Caco-2 (cell line): ENCODE measurements at regions of chr10 and their contacts with region 1.

Region 1: GRCh38 chr10:58384999-58385783 is at the start of gene TFAM:
- DNase-seq: peak; percentile 99 to 100
- H3K4me3 ChIP-seq: peak within 1 kb of the TSS; percentile 83
- H3K4me3 Mint-ChIP-seq: peak within 1 kb of the TSS; percentile 87
- H3K27ac Mint-ChIP-seq: peak within 1 kb of the TSS; percentile 80
- H3K4me1 ChIP-seq: no peaks in the 10 kb centered on the region; the same call in 1 of the 2 replicates
- H3K4me1 Mint-ChIP-seq: peaks cover 9% of the 10 kb centered on the region
- H3K27me3 ChIP-seq: no peaks in the 10 kb centered on the region
- H3K27me3 Mint-ChIP-seq: no peaks in the 10 kb centered on the region
- CTCF ChIP-seq: peak; percentile 71 to 98
- total RNA-seq, gene TFAM: 228 and 240 TPM in 2 replicates

Region 2: DNA sequence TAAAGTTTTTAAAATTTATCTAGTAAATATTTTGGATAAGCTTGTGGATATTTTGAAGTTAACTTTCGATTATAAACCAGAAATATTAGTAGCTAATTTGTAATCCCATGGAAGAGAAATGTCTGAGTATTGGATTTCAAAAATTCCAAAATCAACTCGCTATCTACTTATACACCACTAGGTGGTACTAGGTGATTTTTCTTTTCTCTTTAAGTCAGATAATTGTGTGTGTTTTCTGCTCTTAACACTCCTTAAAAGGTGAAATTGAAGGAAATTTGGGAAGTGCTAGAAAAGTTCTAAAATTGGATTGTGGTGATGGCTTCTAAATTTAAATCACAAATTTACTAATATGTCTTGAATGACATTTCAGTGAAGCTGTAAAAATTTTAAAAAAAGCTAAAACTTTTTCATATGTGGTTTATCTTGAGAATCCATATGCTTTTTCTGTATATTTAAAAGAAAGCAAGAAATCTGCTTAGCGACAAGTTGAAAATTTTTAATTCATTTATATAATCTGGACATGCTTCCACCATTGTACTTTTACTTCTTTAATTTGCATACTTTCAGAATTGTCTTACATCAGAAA is 207.7 kb before region 1 on chr10:
- CTCF ChIA-PET with region 1: interaction called, 3 read pairs
- POLR2A ChIA-PET with region 1: no interaction called
- intact Hi-C with region 1: loop called (anchors 1 kb)
- DNase-seq: no peak
- H3K4me3 ChIP-seq: no peak overlapping the region
- H3K4me3 Mint-ChIP-seq: no peak overlapping the region
- H3K27ac Mint-ChIP-seq: no peak overlapping the region
- H3K4me1 ChIP-seq: no peaks in the 10 kb centered on the region
- H3K4me1 Mint-ChIP-seq: peaks cover 6% of the 10 kb centered on the region
- H3K27me3 ChIP-seq: no peaks in the 10 kb centered on the region; the same call in 1 of the 2 replicates
- H3K27me3 Mint-ChIP-seq: peaks cover 5% of the 10 kb centered on the region
- CTCF ChIP-seq: peak; percentile 75

Region 3: DNA sequence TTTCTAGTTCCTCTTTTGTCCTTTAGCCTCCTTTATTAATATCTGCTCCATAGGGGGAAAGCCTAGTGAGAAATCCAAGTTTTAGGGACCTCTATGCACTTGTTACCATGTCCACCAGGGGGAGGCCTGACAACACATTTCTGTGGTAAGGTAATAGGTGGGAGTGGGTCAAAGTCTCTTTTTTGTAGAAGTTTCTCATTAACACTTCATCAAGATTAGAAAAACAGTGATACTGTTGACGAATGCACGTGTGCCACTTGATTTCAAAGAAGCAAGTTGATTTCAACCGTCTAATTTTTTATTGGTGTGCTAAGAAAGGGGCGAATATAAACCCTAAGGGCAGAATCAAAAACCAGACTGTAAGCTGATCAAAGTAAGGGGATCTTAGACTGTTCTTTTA is 85.6 kb before region 1 on chr10:
- CTCF ChIA-PET with region 1: interaction called, 24 read pairs
- POLR2A ChIA-PET with region 1: no interaction called
- intact Hi-C with region 1: loop called (anchors 1 kb)
- DNase-seq: peak; percentile 83 to 90
- H3K4me3 ChIP-seq: peak overlapping the region; percentile 3; the same call in 1 of the 2 replicates
- H3K4me3 Mint-ChIP-seq: peak overlapping the region; percentile 37
- H3K27ac Mint-ChIP-seq: no peak overlapping the region
- H3K4me1 ChIP-seq: peaks cover 10% of the 10 kb centered on the region
- H3K4me1 Mint-ChIP-seq: peaks cover 9% of the 10 kb centered on the region
- H3K27me3 ChIP-seq: no peaks in the 10 kb centered on the region
- H3K27me3 Mint-ChIP-seq: no peaks in the 10 kb centered on the region
- CTCF ChIP-seq: peak; percentile 97 to 99

Region 4: DNA sequence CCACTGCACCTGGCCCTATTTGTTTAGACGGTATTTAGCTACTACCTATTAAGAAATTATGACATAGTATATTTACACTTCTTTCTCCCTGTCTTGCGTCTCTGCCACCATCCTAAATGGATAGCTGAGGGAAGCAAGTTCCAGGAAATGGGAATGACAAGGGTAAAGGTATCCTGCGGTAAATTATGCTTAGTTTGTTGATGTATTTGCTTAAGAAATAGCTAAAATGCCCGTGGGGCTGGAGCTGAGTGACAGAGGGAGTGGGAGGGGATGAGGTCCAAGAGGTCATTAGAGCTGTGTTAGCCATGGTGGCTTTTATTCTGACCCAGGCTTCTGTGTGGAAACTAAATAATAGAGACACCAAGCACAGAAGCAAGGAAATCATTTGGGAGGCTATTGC is 79.4 kb before region 1 on chr10:
- CTCF ChIA-PET with region 1: interaction called, 24 read pairs
- POLR2A ChIA-PET with region 1: interaction called, 4 read pairs
- intact Hi-C with region 1: no loop called
- DNase-seq: peak; percentile 61 to 71
- H3K4me3 ChIP-seq: no peak overlapping the region
- H3K4me3 Mint-ChIP-seq: no peak overlapping the region
- H3K27ac Mint-ChIP-seq: no peak overlapping the region
- H3K4me1 ChIP-seq: peaks cover 13% of the 10 kb centered on the region; the same call in 1 of the 2 replicates
- H3K4me1 Mint-ChIP-seq: peaks cover 18% of the 10 kb centered on the region
- H3K27me3 ChIP-seq: no peaks in the 10 kb centered on the region
- H3K27me3 Mint-ChIP-seq: peaks cover under 1% of the 10 kb centered on the region
- CTCF ChIP-seq: no peak

Region 5: DNA sequence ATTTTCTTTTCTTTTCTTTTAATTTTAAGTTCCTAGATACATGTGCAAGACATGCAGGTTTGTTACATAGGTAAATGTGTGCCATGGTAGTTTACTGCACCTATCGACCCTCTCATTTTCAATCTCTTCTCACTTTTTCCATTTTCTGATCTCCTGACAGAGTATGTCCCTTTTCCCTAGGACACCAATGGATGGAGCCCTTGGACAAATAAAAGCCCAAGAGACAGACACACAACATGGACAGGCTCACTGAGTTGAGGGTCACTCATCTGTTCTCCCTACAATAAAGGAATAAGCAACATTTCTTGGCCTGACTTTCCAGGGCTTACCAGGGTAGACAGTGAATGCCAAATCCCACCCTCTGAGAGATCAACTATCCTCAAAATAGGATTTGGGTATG is 65.6 kb before region 1 on chr10:
- CTCF ChIA-PET with region 1: no interaction called
- POLR2A ChIA-PET with region 1: no interaction called
- intact Hi-C with region 1: loop called (anchors 1 kb)
- DNase-seq: peak in 1 of 2 experiments; percentile 35
- H3K4me3 ChIP-seq: no peak overlapping the region
- H3K4me3 Mint-ChIP-seq: no peak overlapping the region
- H3K27ac Mint-ChIP-seq: no peak overlapping the region
- H3K4me1 ChIP-seq: peaks cover 6% of the 10 kb centered on the region; the same call in 1 of the 2 replicates
- H3K4me1 Mint-ChIP-seq: peaks cover 8% of the 10 kb centered on the region
- H3K27me3 ChIP-seq: no peaks in the 10 kb centered on the region
- H3K27me3 Mint-ChIP-seq: peaks cover 3% of the 10 kb centered on the region
- CTCF ChIP-seq: no peak

Region 6: DNA sequence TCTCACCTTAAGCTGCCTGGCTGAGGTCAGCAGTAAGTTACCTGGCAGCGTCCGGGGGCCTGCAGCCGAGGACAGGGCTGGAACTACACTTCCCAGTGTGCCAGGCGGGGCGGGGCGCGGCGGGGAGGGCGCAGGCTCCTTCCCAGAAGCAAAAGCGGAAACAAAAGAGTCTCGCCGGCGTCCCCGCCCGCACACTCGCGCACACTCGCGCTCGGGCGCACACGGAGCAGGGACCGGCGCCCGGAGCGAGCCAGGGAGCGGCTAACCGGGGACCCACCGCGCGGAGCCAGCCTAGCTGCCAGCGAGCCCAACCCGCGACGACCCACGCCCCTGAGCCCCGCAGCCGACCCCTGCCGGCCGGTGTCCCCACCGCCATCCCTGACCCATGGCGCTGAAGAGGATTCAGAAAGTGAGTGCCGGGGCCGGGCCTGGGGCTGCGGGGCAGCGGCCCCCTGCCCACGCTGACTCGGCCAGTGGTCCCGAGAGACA is 50.3 kb before region 1 on chr10 and contains the start of gene UBE2D1:
- CTCF ChIA-PET with region 1: no interaction called
- POLR2A ChIA-PET with region 1: no interaction called
- intact Hi-C with region 1: loop called (anchors 1 kb)
- DNase-seq: peak; percentile 95 to 97
- H3K4me3 ChIP-seq: peak within 1 kb of the TSS; percentile 83
- H3K4me3 Mint-ChIP-seq: peak within 1 kb of the TSS; percentile 84
- H3K27ac Mint-ChIP-seq: peak within 1 kb of the TSS; percentile 84
- H3K4me1 ChIP-seq: peaks cover 8% of the 10 kb centered on the region
- H3K4me1 Mint-ChIP-seq: peaks cover 16% of the 10 kb centered on the region
- H3K27me3 ChIP-seq: no peaks in the 10 kb centered on the region; the same call in 1 of the 2 replicates
- H3K27me3 Mint-ChIP-seq: peaks cover 8% of the 10 kb centered on the region
- CTCF ChIP-seq: peak; percentile 45 to 59
- total RNA-seq, gene UBE2D1: 35.1 and 39.7 TPM in 2 replicates

Region 7: DNA sequence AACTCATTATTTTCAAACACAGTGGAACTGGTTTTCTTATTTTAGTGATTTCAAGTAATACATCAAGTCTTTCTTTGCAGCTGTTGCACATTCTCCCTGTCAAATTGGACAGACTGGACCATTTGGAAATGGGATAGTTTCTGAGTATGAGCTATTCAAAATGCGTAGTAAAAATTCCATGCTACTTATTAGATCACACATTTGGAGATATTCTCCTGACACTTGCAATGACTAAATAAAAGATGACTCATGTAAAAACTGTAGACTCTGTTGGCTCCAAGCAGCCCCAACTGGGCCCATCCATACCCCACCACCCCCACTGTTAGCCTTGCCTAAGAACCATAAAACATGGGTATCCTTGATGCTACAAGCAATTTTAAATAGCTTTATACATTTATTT is 101.6 kb after region 1 on chr10:
- CTCF ChIA-PET with region 1: no interaction called
- POLR2A ChIA-PET with region 1: no interaction called
- intact Hi-C with region 1: no loop called
- DNase-seq: no peak
- H3K4me3 ChIP-seq: no peak overlapping the region
- H3K4me3 Mint-ChIP-seq: no peak overlapping the region
- H3K27ac Mint-ChIP-seq: no peak overlapping the region
- H3K4me1 ChIP-seq: no peaks in the 10 kb centered on the region
- H3K4me1 Mint-ChIP-seq: peaks cover 5% of the 10 kb centered on the region
- H3K27me3 ChIP-seq: no peaks in the 10 kb centered on the region
- H3K27me3 Mint-ChIP-seq: no peaks in the 10 kb centered on the region
- CTCF ChIP-seq: no peak